ENCODE measurements at regions of chr17 and their contacts with region 1.

Region 1: DNA sequence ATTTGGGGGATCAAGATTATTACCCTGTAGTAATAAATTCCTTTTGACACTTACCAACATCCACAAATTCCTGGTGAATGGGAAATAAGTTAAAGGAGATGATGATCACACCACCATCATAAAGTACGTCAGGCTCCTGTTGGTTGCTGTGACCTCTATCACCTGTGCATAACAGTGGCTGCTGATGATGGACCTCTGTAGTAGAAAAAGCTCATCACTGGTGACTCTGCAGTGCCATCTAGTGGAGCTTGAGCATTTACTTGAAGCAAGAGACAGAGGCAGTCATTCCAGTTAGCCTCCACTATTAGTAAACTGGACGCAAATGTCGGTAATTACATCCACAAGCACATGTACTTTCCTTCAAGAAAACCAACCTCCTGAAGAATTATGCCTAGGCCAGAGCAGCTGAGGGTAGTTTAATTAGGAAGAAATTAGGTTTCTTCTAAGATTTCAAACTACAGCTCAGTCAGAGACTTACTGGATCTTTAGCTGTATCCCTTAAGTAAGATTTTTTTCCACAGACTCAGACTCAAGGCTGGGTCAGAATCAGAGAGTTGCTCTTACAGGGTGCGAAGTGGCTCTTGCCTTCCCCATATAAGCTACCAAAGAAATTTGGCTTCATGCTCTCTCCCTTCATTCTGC is 39.3 kb downstream of the CYB561 start:
- DNase-seq: peak; percentile 63 to 74 (median 73)
- H3K4me3 ChIP-seq: no peak overlapping the region
- H3K4me3 Mint-ChIP-seq: no peak overlapping the region
- H3K27ac ChIP-seq: no peak overlapping the region
- H3K27ac Mint-ChIP-seq: no peak overlapping the region
- H3K4me1 ChIP-seq: no peaks in the 10 kb centered on the region
- H3K4me1 Mint-ChIP-seq: peaks cover 3% of the 10 kb centered on the region
- H3K27me3 ChIP-seq: no peaks in the 10 kb centered on the region
- H3K27me3 Mint-ChIP-seq: peaks cover 0 to 1% (median 0%) of the 10 kb centered on the region in 3 donors
- CTCF ChIP-seq: peak; percentile 79

Region 2: GRCh38 chr17:62703775-62704378 is 702.9 kb before region 1 on chr17:
- intact Hi-C with region 1: loop called (anchors 2 to 10 kb)
- DNase-seq: peak; percentile 40 to 67 (median 57)
- H3K4me3 ChIP-seq: peak overlapping the region; percentile 7 to 75 (median 22)
- H3K4me3 Mint-ChIP-seq: peak overlapping the region; percentile 35 to 60
- H3K27ac ChIP-seq: no peak overlapping the region
- H3K27ac Mint-ChIP-seq: no peak overlapping the region
- H3K4me1 ChIP-seq: peaks cover 9 to 12% of the 10 kb centered on the region in 2 donors
- H3K4me1 Mint-ChIP-seq: peaks cover 10% of the 10 kb centered on the region
- H3K27me3 ChIP-seq: peaks cover 0 to 20% of the 10 kb centered on the region in 2 donors
- H3K27me3 Mint-ChIP-seq: peaks cover 19 to 39% (median 20%) of the 10 kb centered on the region in 3 donors
- CTCF ChIP-seq: peak; percentile 86

Region 3: DNA sequence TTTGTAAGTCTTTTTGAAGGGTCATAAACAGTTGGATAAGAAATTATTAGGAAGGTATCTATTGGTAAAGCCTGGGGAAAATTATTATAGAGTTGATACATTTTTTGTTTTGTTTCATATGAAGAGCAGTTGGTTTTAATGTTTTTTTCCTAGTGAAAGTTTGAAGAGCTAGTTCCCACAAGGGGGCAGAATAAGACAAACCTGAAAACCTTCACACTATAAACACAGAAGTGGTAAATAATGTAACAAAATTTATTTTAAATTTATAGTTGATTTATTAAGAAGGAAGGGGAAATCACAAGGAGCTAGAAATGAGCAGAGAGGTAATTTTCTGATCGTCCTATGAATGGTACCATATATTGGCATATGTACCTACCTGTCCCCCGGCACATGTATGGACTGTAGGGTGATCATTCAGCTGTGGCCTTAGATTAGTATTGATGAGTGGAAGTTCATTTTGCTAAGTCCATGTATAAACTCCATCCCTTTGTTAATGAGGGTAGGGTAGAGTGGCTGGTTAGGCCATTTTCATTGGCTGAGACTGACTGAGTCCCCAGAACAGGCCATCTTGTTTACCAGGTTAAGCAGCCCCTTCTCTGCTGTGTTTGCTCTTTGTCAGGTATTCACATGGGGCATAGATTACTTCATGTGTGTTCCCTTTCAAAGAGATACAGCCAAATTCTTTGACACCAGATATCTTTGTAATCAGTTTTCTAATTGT is 324.4 kb before region 1 on chr17:
- intact Hi-C with region 1: loop called (anchors 5 kb)
- DNase-seq: peak in 2 of 3 donors; percentile 10 to 16
- H3K4me3 ChIP-seq: no peak overlapping the region
- H3K4me3 Mint-ChIP-seq: no peak overlapping the region
- H3K27ac ChIP-seq: peak overlapping the region in 1 of 2 donors; percentile 17
- H3K27ac Mint-ChIP-seq: peak overlapping the region in 1 of 7 donors; percentile 71
- H3K4me1 ChIP-seq: no peaks in the 10 kb centered on the region
- H3K4me1 Mint-ChIP-seq: peaks cover 4% of the 10 kb centered on the region
- H3K27me3 ChIP-seq: no peaks in the 10 kb centered on the region
- H3K27me3 Mint-ChIP-seq: no peaks in the 10 kb centered on the region
- CTCF ChIP-seq: peak; percentile 57

Region 4: GRCh38 chr17:63113183-63113582 is 293.6 kb before region 1 on chr17:
- intact Hi-C with region 1: loop called in 1 of 2 experiments (anchors 10 kb)
- DNase-seq: peak in 2 of 3 donors; percentile 7 to 8
- H3K4me3 ChIP-seq: no peak overlapping the region
- H3K4me3 Mint-ChIP-seq: no peak overlapping the region
- H3K27ac ChIP-seq: no peak overlapping the region
- H3K27ac Mint-ChIP-seq: no peak overlapping the region
- H3K4me1 ChIP-seq: no peaks in the 10 kb centered on the region
- H3K4me1 Mint-ChIP-seq: no peaks in the 10 kb centered on the region
- H3K27me3 ChIP-seq: no peaks in the 10 kb centered on the region
- H3K27me3 Mint-ChIP-seq: no peaks in the 10 kb centered on the region
- CTCF ChIP-seq: peak; percentile 46

Measured in CD14-positive monocyte (primary cell).